Psoas muscle (tissue), 8 donors: ENCODE measurements at regions of chr1 and their contacts with region 1.

Region 1: GRCh38 chr1:212665241-212666115 is 34.2 kb downstream of the BATF3 start:
- DNase-seq: peak; percentile 80 to 86
- ATAC-seq: peak; percentile 95 to 99 (median 96)
- H3K4me3 ChIP-seq: peak overlapping the region; percentile 67
- H3K27ac ChIP-seq: peak overlapping the region; percentile 57
- H3K4me1 ChIP-seq: peaks cover 10% of the 10 kb centered on the region
- H3K27me3 ChIP-seq: peaks cover 0 to 3% (median 0%) of the 10 kb centered on the region in 3 donors
- CTCF ChIP-seq: peak; percentile 90

Region 2: GRCh38 chr1:212782422-212783154 is 117.1 kb after region 1 on chr1:
- intact Hi-C with region 1: loop called (anchors 2 to 5 kb)
- DNase-seq: no peak
- ATAC-seq: peak in 2 of 4 donors; percentile 27 to 63
- H3K4me3 ChIP-seq: no peak overlapping the region
- H3K27ac ChIP-seq: no peak overlapping the region
- H3K4me1 ChIP-seq: no peaks in the 10 kb centered on the region
- H3K27me3 ChIP-seq: no peaks in the 10 kb centered on the region
- CTCF ChIP-seq: peak; percentile 56